ENCODE measurements at regions of chr22 and their contacts with region 1.

Region 1: DNA sequence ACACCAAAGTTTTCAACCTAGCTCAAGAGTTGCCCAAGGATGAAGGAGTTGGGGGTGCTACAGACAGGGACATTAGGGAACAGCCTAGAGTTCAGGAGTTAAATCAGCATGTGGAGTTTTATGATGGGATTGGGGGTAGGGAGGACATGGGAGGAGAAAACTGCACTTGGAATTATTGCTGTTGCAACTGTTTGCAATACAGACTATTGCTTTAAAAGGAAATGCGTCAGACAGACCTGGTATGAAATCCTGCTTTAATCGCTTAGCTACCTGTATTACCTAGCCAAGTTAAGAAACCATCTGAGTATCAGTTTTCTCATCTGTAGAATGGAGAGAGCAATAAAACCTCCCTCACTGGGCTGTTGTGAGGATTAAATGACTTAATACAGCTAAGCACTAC is 6.3 kb downstream of the TMA7B start:
- DNase-seq: no peak
- ATAC-seq: no peak
- H3K4me3 ChIP-seq: no peak overlapping the region
- H3K4me3 Mint-ChIP-seq: no peak overlapping the region
- H3K27ac ChIP-seq: no peak overlapping the region
- H3K27ac Mint-ChIP-seq: peak overlapping the region in 8 of 9 donors; percentile 32 to 88 (median 70)
- H3K4me1 ChIP-seq: peaks cover 5% of the 10 kb centered on the region in 2 donors
- H3K4me1 Mint-ChIP-seq: peaks cover 11 to 19% (median 14%) of the 10 kb centered on the region in 7 donors
- H3K27me3 ChIP-seq: no peaks in the 10 kb centered on the region
- H3K27me3 Mint-ChIP-seq: peaks cover 0 to 3% (median 0%) of the 10 kb centered on the region in 5 donors

Region 2: DNA sequence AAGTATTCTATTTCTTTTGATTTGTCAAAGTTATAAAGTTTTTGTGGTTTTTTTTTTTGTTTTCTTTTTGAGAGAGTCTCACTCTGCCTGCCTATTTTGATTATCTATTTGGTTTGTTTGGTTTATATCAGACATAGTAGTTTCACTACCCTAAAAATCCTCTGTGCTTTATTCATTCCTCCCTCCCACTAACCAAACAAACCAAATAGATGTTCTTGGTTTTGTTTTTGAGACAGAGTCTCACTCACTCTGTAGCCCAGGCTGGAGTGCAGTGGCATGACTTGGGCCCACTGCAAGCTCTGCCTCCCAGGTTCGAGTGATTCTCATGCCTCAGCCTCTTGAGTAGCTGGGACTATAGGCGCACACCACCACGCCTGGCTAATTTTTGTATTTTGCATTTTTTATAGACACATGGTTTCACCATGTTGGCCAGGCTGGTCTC is 140.8 kb before region 1 on chr22:
- CTCF ChIA-PET with region 1: interaction called, 11 read pairs
- POLR2A ChIA-PET with region 1: no interaction called
- intact Hi-C with region 1: no loop called
- DNase-seq: no peak
- ATAC-seq: no peak
- H3K4me3 ChIP-seq: no peak overlapping the region
- H3K4me3 Mint-ChIP-seq: no peak overlapping the region
- H3K27ac ChIP-seq: no peak overlapping the region
- H3K27ac Mint-ChIP-seq: no peak overlapping the region
- H3K4me1 ChIP-seq: no peaks in the 10 kb centered on the region
- H3K4me1 Mint-ChIP-seq: peaks cover 0 to 21% (median 6%) of the 10 kb centered on the region in 7 donors
- H3K27me3 ChIP-seq: no peaks in the 10 kb centered on the region
- H3K27me3 Mint-ChIP-seq: peaks cover 0 to 24% (median 0%) of the 10 kb centered on the region in 5 donors